Prostate gland (tissue), 2 donors: ENCODE measurements at regions of chr15 and their contacts with region 1.

Region 1: DNA sequence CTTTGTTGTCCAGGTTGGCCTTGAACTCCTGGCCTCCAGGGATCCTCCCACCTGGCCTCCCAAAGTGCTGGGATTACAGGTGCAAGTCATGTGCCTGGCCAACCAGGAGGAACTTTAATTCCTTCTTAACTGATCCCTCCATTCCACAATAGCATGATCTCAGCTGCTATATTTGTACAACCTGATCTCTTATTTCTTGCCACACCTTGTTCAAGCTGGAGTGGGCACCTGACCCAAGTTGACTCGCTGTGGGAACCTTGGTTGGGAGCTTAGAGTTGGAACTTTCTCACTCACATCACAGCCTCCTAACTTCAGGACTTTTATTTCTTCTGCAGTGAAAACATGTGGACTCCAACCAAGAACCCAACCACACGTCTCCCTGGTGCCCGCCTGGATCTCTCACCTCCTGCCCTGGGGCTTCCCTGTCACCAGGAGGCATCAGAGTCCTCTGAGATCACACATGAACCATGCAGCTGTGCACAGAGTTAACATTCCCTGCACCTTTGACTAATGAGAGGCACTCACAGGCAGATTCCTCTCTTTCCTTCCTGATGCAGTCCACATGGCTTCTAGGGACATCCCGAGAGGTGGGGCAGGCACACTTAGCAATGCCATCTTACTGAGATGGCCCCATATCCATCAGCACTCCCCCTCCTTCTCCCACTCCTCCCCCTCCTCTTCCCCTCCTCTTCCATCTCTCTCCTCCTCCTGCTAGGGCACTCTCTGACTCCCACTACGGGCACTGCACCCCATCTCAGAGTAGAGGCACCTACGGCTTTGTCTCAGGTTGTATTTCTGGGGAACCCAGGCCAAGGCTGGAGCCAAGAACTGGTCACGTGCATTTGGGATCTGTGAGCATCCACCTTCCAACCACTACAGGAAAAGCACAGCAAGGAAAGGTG is 9.7 kb upstream of the CYFIP1 start:
- DNase-seq: no peak
- H3K4me3 ChIP-seq: no peak overlapping the region
- H3K27ac ChIP-seq: no peak overlapping the region
- H3K4me1 ChIP-seq: no peaks in the 10 kb centered on the region
- H3K27me3 ChIP-seq: no peaks in the 10 kb centered on the region
- CTCF ChIP-seq: no peak
- POLR2A ChIP-seq: no peak

Region 2: DNA sequence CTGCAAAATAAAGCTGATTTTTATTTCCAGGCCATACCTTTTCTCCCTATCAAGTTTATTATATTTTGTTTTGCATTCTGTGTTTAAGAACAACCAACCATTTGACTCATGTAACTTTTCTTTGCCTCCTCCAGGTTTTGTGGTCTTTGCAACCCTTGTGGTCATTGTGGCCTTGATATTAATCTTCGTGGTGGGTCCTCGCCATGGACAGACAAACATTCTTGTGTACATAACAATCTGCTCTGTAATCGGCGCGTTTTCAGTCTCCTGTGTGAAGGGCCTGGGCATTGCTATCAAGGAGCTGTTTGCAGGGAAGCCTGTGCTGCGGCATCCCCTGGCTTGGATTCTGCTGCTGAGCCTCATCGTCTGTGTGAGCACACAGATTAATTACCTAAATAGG is 123.7 kb before region 1 on chr15:
- intact Hi-C with region 1: loop called (anchors 5 kb)
- DNase-seq: no peak
- H3K4me3 ChIP-seq: no peak overlapping the region
- H3K27ac ChIP-seq: no peak overlapping the region
- H3K4me1 ChIP-seq: peaks cover 3% of the 10 kb centered on the region
- H3K27me3 ChIP-seq: no peaks in the 10 kb centered on the region
- CTCF ChIP-seq: no peak
- POLR2A ChIP-seq: no peak

Region 3: DNA sequence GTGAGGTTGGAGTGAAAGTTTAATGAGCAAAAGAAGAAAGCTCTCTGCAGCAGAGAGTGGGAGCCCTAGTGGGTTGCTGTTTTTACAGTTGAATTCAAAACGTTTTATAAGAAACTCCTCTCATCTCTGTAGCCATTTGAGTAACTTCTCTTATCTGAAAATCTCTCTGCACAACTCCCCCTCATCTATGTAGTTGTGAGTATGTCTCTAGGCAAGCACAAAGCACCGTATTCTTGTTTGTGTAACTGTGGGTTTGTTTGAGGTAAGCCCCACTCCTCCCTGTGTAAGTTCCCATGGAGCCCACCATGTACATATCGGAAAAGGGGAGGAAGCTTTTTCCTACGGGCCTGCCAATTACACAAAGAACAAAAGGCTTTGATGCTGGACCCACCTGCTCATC is 513.7 kb after region 1 on chr15:
- intact Hi-C with region 1: no loop called
- DNase-seq: no peak
- H3K4me3 ChIP-seq: no peak overlapping the region
- H3K27ac ChIP-seq: no peak overlapping the region
- H3K4me1 ChIP-seq: no peaks in the 10 kb centered on the region
- H3K27me3 ChIP-seq: peaks cover 2% of the 10 kb centered on the region
- CTCF ChIP-seq: no peak
- POLR2A ChIP-seq: no peak

Region 4: GRCh38 chr15:24067733-24068501 is 1078.1 kb after region 1 on chr15:
- intact Hi-C with region 1: no loop called
- DNase-seq: no peak
- H3K4me3 ChIP-seq: no peak overlapping the region
- H3K27ac ChIP-seq: no peak overlapping the region
- H3K4me1 ChIP-seq: no peaks in the 10 kb centered on the region
- H3K27me3 ChIP-seq: no peaks in the 10 kb centered on the region
- CTCF ChIP-seq: no peak
- POLR2A ChIP-seq: no peak